Activated naive CD4-positive, alpha-beta T cell treated with anti-CD3 and anti-CD28 coated beads for 36 hours (primary cell): ENCODE measurements at regions of chr4 and their contacts with region 1.

Region 1: DNA sequence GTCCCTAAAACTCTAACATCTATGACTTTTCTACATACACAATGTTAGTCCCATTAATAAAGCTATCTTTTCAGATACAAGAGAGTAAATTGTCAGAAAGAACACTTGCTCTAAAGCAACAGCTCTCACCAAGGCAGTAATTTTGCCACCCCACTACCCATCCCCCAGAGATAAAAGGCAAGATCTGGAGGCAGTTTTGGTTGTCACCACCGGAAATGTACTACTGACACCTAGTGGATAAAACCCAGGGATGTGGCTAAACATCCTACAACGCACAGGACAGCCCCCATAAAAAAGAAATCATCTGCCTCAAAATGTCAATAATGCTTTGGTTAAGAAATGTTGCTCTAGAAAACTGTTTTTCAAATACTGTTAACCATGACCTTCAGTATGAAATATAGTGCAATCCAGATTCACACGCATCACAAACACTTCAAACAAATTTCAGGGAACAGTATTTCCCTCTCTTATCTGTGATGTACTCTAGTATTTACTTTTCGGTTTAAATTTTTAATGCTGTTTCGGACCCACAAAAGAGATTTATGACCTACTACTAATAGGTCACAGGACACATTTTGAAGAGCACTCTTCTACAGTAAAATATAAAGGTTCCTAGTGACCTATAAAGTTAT is 5.1 kb downstream of the FBXL5 start:
- DNase-seq: peak; percentile 77
- H3K4me3 Mint-ChIP-seq: peak overlapping the region; percentile 50
- H3K27ac Mint-ChIP-seq: peak overlapping the region; percentile 77
- H3K4me1 Mint-ChIP-seq: peaks cover 64% of the 10 kb centered on the region
- H3K27me3 Mint-ChIP-seq: no peaks in the 10 kb centered on the region

Region 2: GRCh38 chr4:15182600-15183220 is 467.3 kb before region 1 on chr4:
- CTCF ChIA-PET with region 1: no interaction called
- intact Hi-C with region 1: loop called (anchors 5 kb)
- DNase-seq: peak; percentile 56
- H3K4me3 Mint-ChIP-seq: no peak overlapping the region
- H3K27ac Mint-ChIP-seq: no peak overlapping the region
- H3K4me1 Mint-ChIP-seq: peaks cover 25% of the 10 kb centered on the region
- H3K27me3 Mint-ChIP-seq: no peaks in the 10 kb centered on the region

Region 3: DNA sequence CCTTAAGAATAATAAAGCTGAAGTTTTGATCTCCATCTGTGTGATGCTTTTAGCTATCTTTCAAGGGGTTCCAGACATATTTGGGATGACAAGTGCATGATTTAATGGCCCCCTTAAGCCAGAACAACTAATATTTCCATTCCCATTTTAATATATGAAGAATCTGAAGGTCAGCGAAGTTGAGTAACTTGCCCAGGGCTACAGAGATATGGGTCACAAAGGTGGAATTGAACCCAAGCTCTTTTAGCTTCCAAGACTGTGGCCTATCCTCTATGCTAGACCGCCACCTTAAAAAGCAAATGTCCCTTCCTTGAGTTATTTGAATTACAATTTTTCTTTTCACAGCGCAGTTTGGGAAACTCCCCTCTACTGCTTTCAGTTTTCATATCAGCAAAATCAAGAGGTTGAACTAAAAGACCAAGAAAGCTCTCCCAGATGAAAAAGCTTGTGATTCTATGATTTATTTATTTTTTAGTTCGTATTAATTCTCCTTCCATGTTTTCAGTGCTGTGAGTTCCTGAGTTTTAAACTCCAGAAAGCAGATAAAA is 396.8 kb before region 1 on chr4:
- CTCF ChIA-PET with region 1: interaction called, 5 read pairs
- intact Hi-C with region 1: loop called (anchors 5 kb)
- DNase-seq: no peak
- H3K4me3 Mint-ChIP-seq: no peak overlapping the region
- H3K27ac Mint-ChIP-seq: no peak overlapping the region
- H3K4me1 Mint-ChIP-seq: no peaks in the 10 kb centered on the region
- H3K27me3 Mint-ChIP-seq: no peaks in the 10 kb centered on the region

Region 4: GRCh38 chr4:15428611-15429010 is 221.4 kb before region 1 on chr4:
- CTCF ChIA-PET with region 1: no interaction called
- intact Hi-C with region 1: loop called (anchors 2 kb)
- DNase-seq: no peak
- H3K4me3 Mint-ChIP-seq: no peak overlapping the region
- H3K27ac Mint-ChIP-seq: no peak overlapping the region
- H3K4me1 Mint-ChIP-seq: peaks cover 25% of the 10 kb centered on the region
- H3K27me3 Mint-ChIP-seq: no peaks in the 10 kb centered on the region

Region 5: GRCh38 chr4:15479089-15479912 is 170.7 kb before region 1 on chr4:
- CTCF ChIA-PET with region 1: interaction called, 7 read pairs
- intact Hi-C with region 1: loop called (anchors 1 kb)
- DNase-seq: no peak
- H3K4me3 Mint-ChIP-seq: no peak overlapping the region
- H3K27ac Mint-ChIP-seq: no peak overlapping the region
- H3K4me1 Mint-ChIP-seq: no peaks in the 10 kb centered on the region
- H3K27me3 Mint-ChIP-seq: no peaks in the 10 kb centered on the region

Region 6: GRCh38 chr4:16026160-16026761 is 376.2 kb after region 1 on chr4:
- CTCF ChIA-PET with region 1: no interaction called
- intact Hi-C with region 1: no loop called
- DNase-seq: peak; percentile 26
- H3K4me3 Mint-ChIP-seq: no peak overlapping the region
- H3K27ac Mint-ChIP-seq: no peak overlapping the region
- H3K4me1 Mint-ChIP-seq: no peaks in the 10 kb centered on the region
- H3K27me3 Mint-ChIP-seq: peaks cover 13% of the 10 kb centered on the region